ENCODE measurements at regions of chr16 and their contacts with region 1.

Region 1: DNA sequence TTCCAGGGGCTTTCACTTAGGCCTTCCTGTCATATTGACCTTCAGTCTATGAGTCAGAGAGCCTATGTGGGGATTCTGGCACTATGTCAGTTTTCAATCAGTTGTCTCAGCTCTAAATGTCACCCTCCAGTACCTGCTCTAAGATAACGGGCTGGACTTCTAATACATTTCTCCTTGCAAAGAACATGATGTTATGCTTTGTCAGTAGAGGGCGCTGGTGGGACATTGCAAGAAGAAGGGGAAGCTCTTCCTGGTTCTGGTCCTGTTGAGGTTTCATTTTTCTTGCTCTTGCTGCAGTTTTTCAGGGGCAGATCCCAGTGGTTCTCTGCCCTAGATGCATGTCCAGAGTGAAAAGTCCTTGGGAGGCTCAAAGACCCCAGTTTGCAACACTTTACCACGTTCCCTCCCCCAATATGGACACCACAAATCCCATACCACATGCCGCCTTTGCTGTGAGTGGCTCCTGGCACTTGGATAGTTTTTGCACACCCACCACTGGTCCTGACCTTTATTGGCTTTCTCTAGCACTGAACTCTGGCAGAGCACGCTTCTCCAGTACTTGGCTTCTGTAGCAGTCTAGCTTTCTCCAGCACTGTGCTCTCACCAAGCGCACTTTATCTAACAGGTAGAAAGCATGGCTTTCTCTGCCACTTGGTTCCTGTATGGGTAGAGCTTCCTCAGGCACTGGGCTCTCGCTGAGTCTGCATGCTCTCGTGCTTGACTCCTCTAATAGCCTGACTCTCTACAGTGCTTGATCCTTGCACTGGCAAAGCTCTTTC is 49.0 kb downstream of the BCL7C start:
- DNase-seq: peak; percentile 91
- H3K4me3 Mint-ChIP-seq: peak overlapping the region; percentile 24
- H3K27ac Mint-ChIP-seq: no peak overlapping the region
- H3K4me1 Mint-ChIP-seq: peaks cover 14% of the 10 kb centered on the region
- H3K27me3 Mint-ChIP-seq: no peaks in the 10 kb centered on the region
- CTCF ChIP-seq: peak; percentile 86

Region 2: GRCh38 chr16:30621765-30622164 is 223.1 kb before region 1 on chr16:
- CTCF ChIA-PET with region 1: no interaction called
- intact Hi-C with region 1: no loop called
- DNase-seq: no peak
- H3K4me3 Mint-ChIP-seq: no peak overlapping the region
- H3K27ac Mint-ChIP-seq: no peak overlapping the region
- H3K4me1 Mint-ChIP-seq: no peaks in the 10 kb centered on the region
- H3K27me3 Mint-ChIP-seq: peaks cover 45% of the 10 kb centered on the region
- CTCF ChIP-seq: no peak

Region 3: DNA sequence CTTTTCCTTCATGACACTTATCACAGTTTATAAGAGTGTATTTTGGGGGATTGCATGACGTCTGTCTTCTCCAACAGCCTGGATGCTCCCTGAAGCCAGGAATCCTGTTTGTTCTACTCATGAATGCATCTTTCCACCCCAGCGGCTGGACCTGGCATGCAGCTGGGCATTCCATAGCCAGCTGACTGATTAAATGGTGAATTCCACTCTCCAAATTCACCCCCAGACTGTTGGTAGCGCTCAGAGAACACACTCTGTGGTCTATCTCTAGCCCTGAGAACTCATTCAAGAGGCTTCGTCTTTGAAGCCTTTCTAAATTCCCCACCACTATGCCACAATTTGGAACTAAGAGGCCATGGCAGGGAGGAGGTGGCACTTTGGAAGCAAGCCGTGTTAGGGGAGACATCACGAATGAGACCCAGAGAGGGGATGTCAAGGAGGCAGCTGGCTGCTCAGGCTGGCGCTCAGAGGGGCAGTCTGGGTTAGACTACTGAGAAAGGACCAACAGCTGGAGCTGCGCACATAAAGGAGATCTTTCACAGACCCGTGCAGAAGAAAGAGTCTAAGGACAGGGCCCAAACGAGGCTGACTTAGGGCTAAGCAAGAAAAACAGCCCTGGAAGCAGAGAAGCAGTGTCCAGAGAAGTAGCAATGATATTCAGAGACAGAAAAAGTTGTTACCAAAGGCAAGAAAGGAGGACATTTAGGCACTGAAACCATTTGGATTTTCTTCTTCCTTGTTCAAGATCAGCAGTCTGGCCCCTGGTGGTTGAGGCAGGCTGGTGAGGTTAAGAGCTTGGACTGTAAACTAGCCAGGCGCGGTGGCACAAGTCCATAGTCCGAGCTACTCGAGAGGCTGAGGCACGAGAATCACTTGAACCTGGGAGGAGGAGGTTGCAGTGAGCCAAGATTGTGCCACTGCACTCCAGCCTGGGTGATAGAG is 15.5 kb before region 1 on chr16:
- CTCF ChIA-PET with region 1: interaction called, 4 read pairs
- intact Hi-C with region 1: loop called (anchors 1 kb)
- DNase-seq: peak; percentile 35
- H3K4me3 Mint-ChIP-seq: no peak overlapping the region
- H3K27ac Mint-ChIP-seq: no peak overlapping the region
- H3K4me1 Mint-ChIP-seq: peaks cover under 1% of the 10 kb centered on the region
- H3K27me3 Mint-ChIP-seq: peaks cover 47% of the 10 kb centered on the region
- CTCF ChIP-seq: no peak

Region 4: GRCh38 chr16:30893744-30894539 is 49.1 kb after region 1 on chr16 and contains the start of gene BCL7C:
- CTCF ChIA-PET with region 1: no interaction called
- intact Hi-C with region 1: loop called (anchors 2 kb)
- DNase-seq: peak; percentile 98
- H3K4me3 Mint-ChIP-seq: peak within 1 kb of the TSS; percentile 75
- H3K27ac Mint-ChIP-seq: peak within 1 kb of the TSS; percentile 46
- H3K4me1 Mint-ChIP-seq: peaks cover 42% of the 10 kb centered on the region
- H3K27me3 Mint-ChIP-seq: no peaks in the 10 kb centered on the region
- CTCF ChIP-seq: peak; percentile 34
- total RNA-seq, gene BCL7C: 22.5 and 26.6 TPM in 2 replicates

Region 5: GRCh38 chr16:30922960-30923535 is 78.2 kb after region 1 on chr16:
- CTCF ChIA-PET with region 1: interaction called, 4 read pairs
- intact Hi-C with region 1: loop called (anchors 1 kb)
- DNase-seq: peak; percentile 99
- H3K4me3 Mint-ChIP-seq: peak overlapping the region; percentile 94
- H3K27ac Mint-ChIP-seq: peak overlapping the region; percentile 100
- H3K4me1 Mint-ChIP-seq: peaks cover 26% of the 10 kb centered on the region
- H3K27me3 Mint-ChIP-seq: no peaks in the 10 kb centered on the region
- CTCF ChIP-seq: no peak

Measured in Calu3 (cell line).